Naive thymus-derived CD8-positive, alpha-beta T cell (primary cell): ENCODE measurements at regions of chr5 and their contacts with region 1.

Region 1: GRCh38 chr5:177390363-177391300 is 6.4 kb downstream of the SLC34A1 start:
- DNase-seq: peak; percentile 73 to 93 (median 88)
- ATAC-seq: peak; percentile 83
- H3K4me3 Mint-ChIP-seq: peak overlapping the region in 8 of 10 donors; percentile 23 to 79 (median 55)
- H3K27ac Mint-ChIP-seq: peak overlapping the region; percentile 46 to 94 (median 82)
- H3K4me1 Mint-ChIP-seq: peaks cover 21 to 47% (median 39%) of the 10 kb centered on the region in 4 donors
- H3K27me3 Mint-ChIP-seq: peaks cover 0 to 4% (median 0%) of the 10 kb centered on the region in 5 donors

Region 2: DNA sequence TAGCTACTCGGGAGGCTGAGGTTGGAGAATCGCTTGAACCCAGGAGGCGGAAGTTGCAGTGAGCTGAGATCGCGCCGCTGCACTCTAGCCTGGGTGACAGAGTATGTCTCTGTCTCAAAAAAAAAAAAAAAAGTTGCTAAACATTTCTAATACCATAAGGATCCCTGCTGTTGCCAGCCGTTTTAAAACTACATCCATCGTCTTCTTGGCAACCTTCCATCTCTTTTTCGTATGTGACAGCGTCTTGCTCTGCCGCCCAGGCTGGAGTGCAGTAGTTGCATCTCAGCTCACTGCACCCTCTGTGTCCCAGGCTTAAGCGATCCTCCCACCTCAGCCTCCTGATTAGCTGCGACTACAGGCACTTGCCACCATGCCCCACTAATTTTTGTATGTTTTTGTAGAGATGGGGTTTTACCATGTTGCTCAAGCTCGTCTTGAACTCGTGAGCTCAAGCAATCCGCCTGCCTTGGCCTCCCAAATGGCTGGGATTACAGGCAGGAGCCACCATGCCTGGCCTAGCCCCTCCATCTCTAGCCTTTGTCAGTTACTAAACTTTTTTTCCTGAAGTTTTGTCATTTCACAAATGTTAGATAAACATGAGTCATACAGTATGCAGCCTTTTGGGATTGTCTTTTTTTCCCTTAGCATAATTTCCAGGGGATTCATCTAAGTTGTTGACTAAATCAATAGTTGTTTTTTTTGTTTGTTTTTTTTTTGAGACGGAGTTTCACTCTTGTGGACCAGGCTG is 243.6 kb before region 1 on chr5:
- POLR2A ChIA-PET with region 1: no interaction called
- DNase-seq: no peak
- ATAC-seq: no peak
- H3K4me3 Mint-ChIP-seq: no peak overlapping the region
- H3K27ac Mint-ChIP-seq: peak overlapping the region in 3 of 10 donors; percentile 38 to 53 (median 45)
- H3K4me1 Mint-ChIP-seq: peaks cover 9 to 31% (median 20%) of the 10 kb centered on the region in 4 donors
- H3K27me3 Mint-ChIP-seq: no peaks in the 10 kb centered on the region

Region 3: DNA sequence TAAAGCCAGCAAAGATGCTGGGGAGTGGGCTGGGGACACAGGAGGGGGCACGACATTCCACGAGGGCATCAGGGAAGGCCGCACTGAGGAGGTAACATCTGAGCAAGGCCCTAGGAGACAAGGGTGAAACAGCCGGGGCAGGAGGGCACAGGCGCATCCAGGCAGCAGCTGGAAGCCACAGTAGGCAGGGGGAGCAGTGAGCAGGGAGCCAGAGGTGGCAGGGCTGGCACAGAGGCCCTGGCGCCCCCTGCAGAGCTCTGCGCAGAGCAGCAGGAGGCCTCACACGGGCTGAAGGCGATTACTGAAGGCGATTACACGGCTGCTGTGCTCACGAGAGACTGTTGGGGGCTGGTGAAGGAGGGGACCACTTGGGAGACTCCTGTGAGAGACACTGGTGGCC is 54.5 kb before region 1 on chr5:
- POLR2A ChIA-PET with region 1: no interaction called
- DNase-seq: peak in 1 of 10 donors; percentile 19
- ATAC-seq: peak; percentile 68 to 73
- H3K4me3 Mint-ChIP-seq: peak overlapping the region in 1 of 10 donors; percentile 14
- H3K27ac Mint-ChIP-seq: peak overlapping the region in 1 of 10 donors; percentile 52
- H3K4me1 Mint-ChIP-seq: peaks cover 6 to 35% (median 28%) of the 10 kb centered on the region in 4 donors
- H3K27me3 Mint-ChIP-seq: no peaks in the 10 kb centered on the region

Region 4: GRCh38 chr5:177357459-177358351 is 32.9 kb before region 1 on chr5 and contains the start of gene RGS14:
- POLR2A ChIA-PET with region 1: interaction called, 13 read pairs
- DNase-seq: peak; percentile 48 to 92 (median 73)
- ATAC-seq: peak; percentile 87 to 93
- H3K4me3 Mint-ChIP-seq: peak within 1 kb of the TSS; percentile 81 to 98 (median 86)
- H3K27ac Mint-ChIP-seq: peak within 1 kb of the TSS; percentile 92 to 99 (median 96)
- H3K4me1 Mint-ChIP-seq: peaks cover 44 to 84% (median 80%) of the 10 kb centered on the region in 4 donors
- H3K27me3 Mint-ChIP-seq: no peaks in the 10 kb centered on the region
- polyA plus RNA-seq, gene RGS14: 40.9 to 89.3 (median 45.9) TPM

Region 5: GRCh38 chr5:177403792-177404640 is 13.4 kb after region 1 on chr5:
- POLR2A ChIA-PET with region 1: interaction called, 51 read pairs
- DNase-seq: peak; percentile 73 to 92 (median 82)
- ATAC-seq: peak; percentile 80 to 81
- H3K4me3 Mint-ChIP-seq: peak overlapping the region; percentile 60 to 89 (median 80)
- H3K27ac Mint-ChIP-seq: peak overlapping the region in 5 of 10 donors; percentile 27 to 88 (median 60)
- H3K4me1 Mint-ChIP-seq: peaks cover 2 to 47% (median 37%) of the 10 kb centered on the region in 4 donors
- H3K27me3 Mint-ChIP-seq: peaks cover 0 to 9% (median 0%) of the 10 kb centered on the region in 5 donors

Region 6: DNA sequence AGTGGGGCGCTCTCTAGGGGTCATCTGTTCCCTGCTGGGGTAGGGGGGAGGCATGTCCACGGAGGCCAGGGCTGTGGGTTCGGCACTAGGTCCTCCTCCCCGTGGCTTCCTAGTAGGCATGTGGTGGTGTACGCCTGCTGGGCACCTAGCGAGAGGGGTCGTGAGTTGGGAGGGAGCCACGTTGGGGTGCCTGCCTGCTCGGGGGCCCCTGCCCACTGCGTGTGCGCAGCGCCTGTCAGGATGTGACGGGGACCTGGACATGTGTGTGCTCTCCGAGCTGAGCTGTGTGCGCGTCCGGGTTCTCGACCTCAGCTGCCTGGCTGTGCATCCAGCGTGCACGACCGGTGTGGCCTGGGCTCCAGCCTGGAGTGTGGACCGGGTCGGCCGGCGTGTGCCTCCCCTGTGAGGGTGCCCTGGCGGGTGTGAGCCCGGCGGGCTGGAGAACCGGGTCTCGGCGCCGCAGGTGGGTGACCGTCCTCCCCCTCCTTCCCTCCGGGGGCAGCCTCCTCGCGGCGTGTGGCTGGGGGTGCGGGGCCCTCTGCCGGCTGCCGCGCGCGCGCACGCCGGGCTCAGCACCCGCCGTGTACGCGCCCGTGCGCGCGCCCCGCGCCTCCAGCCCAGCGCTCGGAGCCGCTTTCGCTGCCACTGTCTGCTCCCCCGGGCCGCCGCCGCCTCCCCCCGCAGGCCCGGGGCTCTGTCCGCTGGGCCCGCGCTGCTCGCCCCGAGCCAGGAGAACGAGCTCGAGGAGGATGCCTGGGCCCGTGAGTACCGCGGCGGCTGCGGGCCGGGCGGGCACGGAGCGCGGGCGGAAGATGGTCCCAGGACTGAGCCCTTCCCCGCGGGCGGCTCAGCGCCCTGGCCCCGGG is 55.8 kb after region 1 on chr5 and contains the start of gene PRR7:
- POLR2A ChIA-PET with region 1: interaction called, 87 read pairs
- DNase-seq: peak; percentile 60 to 86 (median 78)
- ATAC-seq: peak; percentile 49 to 53
- H3K4me3 Mint-ChIP-seq: peak within 1 kb of the TSS; percentile 76 to 89 (median 82)
- H3K27ac Mint-ChIP-seq: peak within 1 kb of the TSS; percentile 91 to 98 (median 96)
- H3K4me1 Mint-ChIP-seq: peaks cover 28 to 60% (median 48%) of the 10 kb centered on the region in 4 donors
- H3K27me3 Mint-ChIP-seq: no peaks in the 10 kb centered on the region
- polyA plus RNA-seq, gene PRR7: 14.6 to 21.6 (median 20.6) TPM

Region 7: GRCh38 chr5:177497292-177498033 is 106.8 kb after region 1 on chr5 and contains the start of gene PDLIM7:
- POLR2A ChIA-PET with region 1: interaction called, 12 read pairs
- DNase-seq: peak; percentile 84 to 94 (median 92)
- ATAC-seq: peak; percentile 86 to 89
- H3K4me3 Mint-ChIP-seq: peak within 1 kb of the TSS; percentile 70 to 90 (median 84)
- H3K27ac Mint-ChIP-seq: peak within 1 kb of the TSS in 9 of 10 donors; percentile 20 to 90 (median 69)
- H3K4me1 Mint-ChIP-seq: peaks cover 18 to 55% (median 41%) of the 10 kb centered on the region in 4 donors
- H3K27me3 Mint-ChIP-seq: peaks cover 0 to 2% (median 0%) of the 10 kb centered on the region in 5 donors
- polyA plus RNA-seq, gene PDLIM7: 4.3 to 5.8 (median 5.3) TPM